Naive thymus-derived CD4-positive, alpha-beta T cell (primary cell): ENCODE measurements at regions of chr14 and their contacts with region 1.

Region 1: GRCh38 chr14:100067971-100068959 is 3.0 kb downstream of the EVL start:
- DNase-seq: peak; percentile 56 to 92 (median 89)
- ATAC-seq: peak; percentile 74
- H3K4me3 ChIP-seq: peak overlapping the region; percentile 85
- H3K4me3 Mint-ChIP-seq: peak overlapping the region; percentile 92 to 99 (median 95)
- H3K27ac ChIP-seq: peak overlapping the region; percentile 98
- H3K27ac Mint-ChIP-seq: peak overlapping the region; percentile 96 to 100 (median 98)
- H3K4me1 ChIP-seq: peaks cover 42 to 60% of the 10 kb centered on the region in 2 donors
- H3K4me1 Mint-ChIP-seq: peaks cover 42 to 73% (median 61%) of the 10 kb centered on the region in 7 donors
- H3K27me3 ChIP-seq: no peaks in the 10 kb centered on the region
- H3K27me3 Mint-ChIP-seq: peaks cover 0 to 2% (median 0%) of the 10 kb centered on the region in 5 donors

Region 2: GRCh38 chr14:99480917-99481744 is 587.1 kb before region 1 on chr14 and contains the start of gene CCNK:
- CTCF ChIA-PET with region 1: no interaction called
- POLR2A ChIA-PET with region 1: interaction called, 3 read pairs
- intact Hi-C with region 1: loop called (anchors 2 to 5 kb)
- DNase-seq: peak; percentile 98 to 100 (median 100)
- ATAC-seq: peak; percentile 92
- H3K4me3 ChIP-seq: peak within 1 kb of the TSS; percentile 86
- H3K4me3 Mint-ChIP-seq: peak within 1 kb of the TSS; percentile 89 to 100 (median 98)
- H3K27ac ChIP-seq: peak within 1 kb of the TSS; percentile 93
- H3K27ac Mint-ChIP-seq: peak within 1 kb of the TSS; percentile 95 to 99 (median 98)
- H3K4me1 ChIP-seq: peaks cover 26 to 34% of the 10 kb centered on the region in 2 donors
- H3K4me1 Mint-ChIP-seq: peaks cover 44 to 79% (median 70%) of the 10 kb centered on the region in 7 donors
- H3K27me3 ChIP-seq: no peaks in the 10 kb centered on the region
- H3K27me3 Mint-ChIP-seq: no peaks in the 10 kb centered on the region
- total RNA-seq, gene CCNK: 68.4 to 139 (median 81.9) TPM

Region 3: GRCh38 chr14:100056964-100057795 is 11.1 kb before region 1 on chr14:
- CTCF ChIA-PET with region 1: interaction called, 34 read pairs
- POLR2A ChIA-PET with region 1: interaction called, 2,344 read pairs
- intact Hi-C with region 1: loop called (anchors 1 kb)
- DNase-seq: peak in 7 of 9 donors; percentile 62 to 76 (median 67)
- ATAC-seq: peak; percentile 83
- H3K4me3 ChIP-seq: no peak overlapping the region
- H3K4me3 Mint-ChIP-seq: peak overlapping the region; percentile 35 to 79 (median 72)
- H3K27ac ChIP-seq: peak overlapping the region; percentile 33
- H3K27ac Mint-ChIP-seq: peak overlapping the region; percentile 83 to 96 (median 94)
- H3K4me1 ChIP-seq: peaks cover 49% of the 10 kb centered on the region in 2 donors
- H3K4me1 Mint-ChIP-seq: peaks cover 37 to 70% (median 60%) of the 10 kb centered on the region in 7 donors
- H3K27me3 ChIP-seq: no peaks in the 10 kb centered on the region
- H3K27me3 Mint-ChIP-seq: no peaks in the 10 kb centered on the region

Region 4: DNA sequence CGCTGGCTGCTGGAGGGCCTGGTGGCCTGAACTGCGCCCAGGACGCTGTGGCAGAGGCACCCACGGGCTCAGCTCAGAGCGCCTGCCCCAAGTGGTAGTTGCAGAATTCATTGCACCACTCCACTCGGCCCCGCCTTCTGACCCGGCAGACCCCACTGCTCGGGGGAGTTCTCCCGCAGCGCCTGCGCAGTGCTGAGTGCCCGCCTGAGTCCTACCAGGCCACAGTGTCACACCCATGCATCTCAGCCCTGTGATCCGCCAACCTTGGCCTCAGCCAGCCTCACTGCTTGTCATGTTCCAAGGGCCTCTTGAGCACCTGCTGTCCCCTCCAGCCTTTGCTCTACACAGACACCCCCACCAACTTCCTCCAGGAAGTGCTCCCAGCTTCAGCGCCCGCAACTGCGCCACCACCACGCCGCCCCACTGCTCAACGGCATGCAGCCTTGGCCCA is 78.9 kb after region 1 on chr14:
- CTCF ChIA-PET with region 1: interaction called, 3 read pairs
- POLR2A ChIA-PET with region 1: interaction called, 4 read pairs
- intact Hi-C with region 1: loop called in 1 of 2 experiments (anchors 5 kb)
- DNase-seq: peak in 8 of 9 donors; percentile 50 to 77 (median 69)
- ATAC-seq: peak; percentile 73
- H3K4me3 ChIP-seq: peak overlapping the region; percentile 39
- H3K4me3 Mint-ChIP-seq: peak overlapping the region; percentile 33 to 87 (median 83)
- H3K27ac ChIP-seq: peak overlapping the region; percentile 60
- H3K27ac Mint-ChIP-seq: peak overlapping the region; percentile 70 to 96 (median 87)
- H3K4me1 ChIP-seq: peaks cover 0 to 13% of the 10 kb centered on the region in 2 donors
- H3K4me1 Mint-ChIP-seq: peaks cover 16 to 28% (median 20%) of the 10 kb centered on the region in 7 donors
- H3K27me3 ChIP-seq: no peaks in the 10 kb centered on the region
- H3K27me3 Mint-ChIP-seq: peaks cover 0 to 3% (median 0%) of the 10 kb centered on the region in 5 donors

Region 5: GRCh38 chr14:100221533-100222223 is 153.4 kb after region 1 on chr14:
- CTCF ChIA-PET with region 1: interaction called, 4 read pairs
- POLR2A ChIA-PET with region 1: interaction called, 40 read pairs
- intact Hi-C with region 1: no loop called
- DNase-seq: peak; percentile 22 to 81 (median 74)
- ATAC-seq: peak; percentile 95
- H3K4me3 ChIP-seq: peak overlapping the region; percentile 88
- H3K4me3 Mint-ChIP-seq: no peak overlapping the region
- H3K27ac ChIP-seq: peak overlapping the region; percentile 77
- H3K27ac Mint-ChIP-seq: no peak overlapping the region
- H3K4me1 ChIP-seq: peaks cover 31 to 36% of the 10 kb centered on the region in 2 donors
- H3K4me1 Mint-ChIP-seq: peaks cover 11 to 20% (median 13%) of the 10 kb centered on the region in 7 donors
- H3K27me3 ChIP-seq: no peaks in the 10 kb centered on the region
- H3K27me3 Mint-ChIP-seq: no peaks in the 10 kb centered on the region

Region 6: GRCh38 chr14:100375963-100376735 is 307.9 kb after region 1 on chr14:
- CTCF ChIA-PET with region 1: no interaction called
- POLR2A ChIA-PET with region 1: no interaction called
- intact Hi-C with region 1: loop called in 1 of 2 experiments (anchors 2 kb)
- DNase-seq: peak; percentile 87 to 96 (median 90)
- ATAC-seq: peak; percentile 90
- H3K4me3 ChIP-seq: peak within 1 kb of the TSS; percentile 78
- H3K4me3 Mint-ChIP-seq: peak within 1 kb of the TSS; percentile 79 to 95 (median 93)
- H3K27ac ChIP-seq: peak within 1 kb of the TSS; percentile 75
- H3K27ac Mint-ChIP-seq: peak within 1 kb of the TSS; percentile 71 to 96 (median 91)
- H3K4me1 ChIP-seq: peaks cover 19 to 26% of the 10 kb centered on the region in 2 donors
- H3K4me1 Mint-ChIP-seq: peaks cover 23 to 52% (median 37%) of the 10 kb centered on the region in 7 donors
- H3K27me3 ChIP-seq: no peaks in the 10 kb centered on the region
- H3K27me3 Mint-ChIP-seq: no peaks in the 10 kb centered on the region